Naive thymus-derived CD4-positive, alpha-beta T cell (primary cell): ENCODE measurements at regions of chr12 and their contacts with region 1.

Region 1: GRCh38 chr12:68807576-68808387 is at the start of gene MDM2:
- DNase-seq: peak; percentile 94 to 98 (median 96)
- ATAC-seq: peak; percentile 97
- H3K4me3 ChIP-seq: peak within 1 kb of the TSS; percentile 79
- H3K4me3 Mint-ChIP-seq: peak within 1 kb of the TSS; percentile 87 to 100 (median 96)
- H3K27ac ChIP-seq: peak within 1 kb of the TSS; percentile 96
- H3K27ac Mint-ChIP-seq: peak within 1 kb of the TSS; percentile 96 to 100 (median 97)
- H3K4me1 ChIP-seq: peaks cover 3 to 13% of the 10 kb centered on the region in 2 donors
- H3K4me1 Mint-ChIP-seq: peaks cover 6 to 47% (median 29%) of the 10 kb centered on the region in 7 donors
- H3K27me3 ChIP-seq: no peaks in the 10 kb centered on the region
- H3K27me3 Mint-ChIP-seq: no peaks in the 10 kb centered on the region
- total RNA-seq, gene MDM2: 77.8 to 271 (median 80.8) TPM

Region 2: GRCh38 chr12:68223083-68223747 is 584.6 kb before region 1 on chr12:
- CTCF ChIA-PET with region 1: no interaction called
- POLR2A ChIA-PET with region 1: no interaction called
- intact Hi-C with region 1: loop called in 1 of 2 experiments (anchors 5 kb)
- DNase-seq: peak; percentile 39 to 74 (median 64)
- ATAC-seq: peak; percentile 99
- H3K4me3 ChIP-seq: no peak overlapping the region
- H3K4me3 Mint-ChIP-seq: peak overlapping the region in 9 of 10 donors; percentile 30 to 86 (median 65)
- H3K27ac ChIP-seq: no peak overlapping the region
- H3K27ac Mint-ChIP-seq: peak overlapping the region in 6 of 9 donors; percentile 8 to 77 (median 44)
- H3K4me1 ChIP-seq: no peaks in the 10 kb centered on the region
- H3K4me1 Mint-ChIP-seq: peaks cover 6 to 35% (median 6%) of the 10 kb centered on the region in 7 donors
- H3K27me3 ChIP-seq: no peaks in the 10 kb centered on the region
- H3K27me3 Mint-ChIP-seq: peaks cover 0 to 11% (median 0%) of the 10 kb centered on the region in 5 donors

Region 3: DNA sequence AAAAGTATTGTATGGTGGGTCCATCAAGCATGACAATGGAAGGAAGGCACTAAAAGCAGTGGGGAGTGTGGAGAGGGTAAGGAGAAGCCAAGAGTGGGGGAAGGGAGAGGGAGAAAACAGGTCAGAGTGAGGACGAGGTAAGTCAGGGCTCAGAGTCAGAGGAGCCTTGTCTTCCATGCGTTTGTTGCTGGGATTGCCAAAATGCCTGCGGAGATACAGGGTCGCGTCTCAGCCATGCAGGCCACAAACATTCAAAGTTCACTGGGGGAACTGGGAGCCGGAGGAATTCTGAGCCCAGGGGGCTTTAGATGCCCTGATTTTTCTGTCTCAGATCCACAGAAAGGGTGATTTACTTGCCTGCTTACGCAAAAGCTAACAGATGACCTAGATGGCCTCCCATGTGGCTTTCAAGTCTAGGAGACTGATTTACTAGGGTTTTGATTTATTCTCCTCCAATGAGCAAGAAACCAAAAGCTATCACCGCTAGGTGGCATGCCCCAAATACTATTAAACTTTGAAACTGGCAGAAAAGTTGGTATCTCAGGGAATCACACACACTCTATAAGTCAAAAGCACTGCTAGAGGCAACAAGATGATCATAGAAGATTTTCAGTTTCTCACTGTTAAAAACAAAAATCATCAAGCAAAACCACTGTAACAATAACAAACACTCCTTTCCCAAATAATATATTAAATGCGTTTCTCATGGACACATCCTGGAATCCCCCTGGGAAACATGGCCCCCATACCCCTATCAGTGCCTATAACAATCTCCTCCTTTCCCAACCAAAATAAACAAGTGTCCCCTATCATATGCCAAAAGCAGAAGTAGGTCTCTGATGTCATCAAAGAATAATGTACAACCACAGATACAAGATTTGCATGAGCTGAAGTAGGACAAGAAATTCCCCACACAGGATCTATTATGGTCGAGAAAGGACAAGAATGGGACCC is 449.0 kb before region 1 on chr12:
- CTCF ChIA-PET with region 1: no interaction called
- POLR2A ChIA-PET with region 1: no interaction called
- intact Hi-C with region 1: loop called (anchors 1 to 5 kb)
- DNase-seq: peak in 7 of 9 donors; percentile 56 to 80 (median 76)
- ATAC-seq: peak; percentile 84
- H3K4me3 ChIP-seq: no peak overlapping the region
- H3K4me3 Mint-ChIP-seq: peak overlapping the region in 1 of 10 donors; percentile 38
- H3K27ac ChIP-seq: no peak overlapping the region
- H3K27ac Mint-ChIP-seq: peak overlapping the region in 2 of 9 donors; percentile 56 to 72
- H3K4me1 ChIP-seq: peaks cover 13 to 17% of the 10 kb centered on the region in 2 donors
- H3K4me1 Mint-ChIP-seq: peaks cover 25 to 36% (median 30%) of the 10 kb centered on the region in 7 donors
- H3K27me3 ChIP-seq: no peaks in the 10 kb centered on the region
- H3K27me3 Mint-ChIP-seq: no peaks in the 10 kb centered on the region

Region 4: DNA sequence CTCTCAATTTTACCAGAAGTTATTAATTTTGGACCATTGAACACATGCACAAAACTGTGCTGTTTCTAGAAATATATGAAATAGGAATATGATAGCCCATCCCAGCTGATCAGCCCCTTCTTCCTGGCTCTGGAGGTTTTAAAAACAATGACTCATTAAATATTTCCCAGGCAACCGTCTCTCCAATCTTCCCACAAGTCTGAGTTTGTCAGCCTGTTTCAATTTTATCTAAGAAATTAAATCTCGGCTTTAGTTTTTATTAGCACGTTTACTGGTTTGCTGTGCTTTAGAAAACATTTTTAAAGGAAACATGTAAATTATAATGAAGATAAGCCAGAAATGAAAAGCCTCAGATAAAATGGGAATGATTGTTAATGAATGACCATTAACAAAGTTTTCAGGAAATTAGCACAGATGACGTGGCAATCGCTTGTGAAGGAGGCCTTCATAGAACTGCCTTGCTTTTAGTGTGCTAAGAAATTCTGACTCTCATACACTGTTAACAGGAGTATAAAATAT is 286.4 kb before region 1 on chr12:
- CTCF ChIA-PET with region 1: no interaction called
- POLR2A ChIA-PET with region 1: no interaction called
- intact Hi-C with region 1: no loop called
- DNase-seq: no peak
- ATAC-seq: no peak
- H3K4me3 ChIP-seq: no peak overlapping the region
- H3K4me3 Mint-ChIP-seq: no peak overlapping the region
- H3K27ac ChIP-seq: no peak overlapping the region
- H3K27ac Mint-ChIP-seq: no peak overlapping the region
- H3K4me1 ChIP-seq: no peaks in the 10 kb centered on the region
- H3K4me1 Mint-ChIP-seq: peaks cover 0 to 9% (median 2%) of the 10 kb centered on the region in 7 donors
- H3K27me3 ChIP-seq: no peaks in the 10 kb centered on the region
- H3K27me3 Mint-ChIP-seq: peaks cover 0 to 2% (median 0%) of the 10 kb centered on the region in 5 donors

Region 5: DNA sequence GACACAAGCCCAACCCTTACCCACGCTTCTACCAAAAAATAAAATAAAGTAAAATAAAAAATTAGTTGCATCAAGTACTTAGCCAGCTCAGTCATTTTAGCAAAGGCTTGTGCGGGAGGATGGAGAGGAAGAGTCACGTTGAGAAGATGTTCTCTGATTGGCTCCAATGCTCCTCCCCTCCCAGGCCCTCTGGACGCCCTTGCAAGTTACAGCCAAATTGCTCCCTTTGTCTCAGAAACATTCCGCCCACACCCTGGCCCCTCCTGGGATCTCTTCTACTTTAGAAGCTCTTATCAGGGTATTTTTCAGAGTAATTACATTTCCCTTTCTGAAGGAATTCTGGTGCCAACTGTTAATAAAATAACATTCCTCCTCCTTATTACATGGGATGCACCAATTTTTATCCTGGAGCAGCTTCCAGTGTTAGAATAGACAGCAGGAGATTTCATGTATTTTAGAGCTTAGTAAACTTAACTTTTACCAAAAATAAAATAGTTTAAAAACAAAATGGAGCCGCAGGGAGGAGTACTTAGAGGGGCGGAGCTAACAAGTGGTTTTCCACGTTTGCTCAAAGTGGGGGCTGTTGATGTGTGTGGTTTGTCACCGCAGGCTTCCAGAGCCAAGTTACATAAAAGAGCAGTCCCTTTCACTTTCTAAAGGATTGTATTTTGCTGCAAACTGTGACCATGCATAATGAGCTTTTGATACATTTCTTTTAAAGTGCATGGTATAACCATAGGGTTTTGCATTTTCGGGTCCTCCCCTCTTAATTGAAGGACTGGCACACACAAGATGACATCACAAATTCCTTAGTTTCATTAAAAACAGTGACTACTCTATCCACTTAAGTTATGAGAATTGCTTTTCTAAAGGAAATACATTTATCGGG is 268.8 kb before region 1 on chr12:
- CTCF ChIA-PET with region 1: no interaction called
- POLR2A ChIA-PET with region 1: no interaction called
- intact Hi-C with region 1: loop called in 1 of 2 experiments (anchors 5 kb)
- DNase-seq: peak in 8 of 9 donors; percentile 47 to 84 (median 76)
- ATAC-seq: peak; percentile 96
- H3K4me3 ChIP-seq: peak overlapping the region; percentile 23
- H3K4me3 Mint-ChIP-seq: peak overlapping the region; percentile 69 to 84 (median 74)
- H3K27ac ChIP-seq: peak overlapping the region; percentile 57
- H3K27ac Mint-ChIP-seq: peak overlapping the region; percentile 83 to 96 (median 88)
- H3K4me1 ChIP-seq: peaks cover 35 to 40% of the 10 kb centered on the region in 2 donors
- H3K4me1 Mint-ChIP-seq: peaks cover 26 to 64% (median 61%) of the 10 kb centered on the region in 7 donors
- H3K27me3 ChIP-seq: no peaks in the 10 kb centered on the region
- H3K27me3 Mint-ChIP-seq: no peaks in the 10 kb centered on the region

Region 6: GRCh38 chr12:68745904-68746571 is 61.7 kb before region 1 on chr12 and contains the start of gene SLC35E3:
- CTCF ChIA-PET with region 1: interaction called, 10 read pairs
- POLR2A ChIA-PET with region 1: interaction called, 55 read pairs
- intact Hi-C with region 1: loop called (anchors 1 kb)
- DNase-seq: peak; percentile 81 to 91 (median 86)
- ATAC-seq: peak; percentile 99
- H3K4me3 ChIP-seq: peak within 1 kb of the TSS; percentile 98
- H3K4me3 Mint-ChIP-seq: peak within 1 kb of the TSS; percentile 91 to 99 (median 96)
- H3K27ac ChIP-seq: peak within 1 kb of the TSS; percentile 79
- H3K27ac Mint-ChIP-seq: peak within 1 kb of the TSS; percentile 92 to 97 (median 96)
- H3K4me1 ChIP-seq: peaks cover 7 to 16% of the 10 kb centered on the region in 2 donors
- H3K4me1 Mint-ChIP-seq: peaks cover 27 to 64% (median 54%) of the 10 kb centered on the region in 7 donors
- H3K27me3 ChIP-seq: no peaks in the 10 kb centered on the region
- H3K27me3 Mint-ChIP-seq: no peaks in the 10 kb centered on the region
- total RNA-seq, gene SLC35E3: 9.0 to 12.1 (median 9.2) TPM

Region 7: GRCh38 chr12:68932961-68933893 is 125.4 kb after region 1 on chr12 and contains the start of gene CPM:
- CTCF ChIA-PET with region 1: no interaction called
- POLR2A ChIA-PET with region 1: no interaction called
- intact Hi-C with region 1: loop called (anchors 2 kb)
- DNase-seq: peak; percentile 47 to 89 (median 62)
- ATAC-seq: peak; percentile 98
- H3K4me3 ChIP-seq: peak within 1 kb of the TSS; percentile 58
- H3K4me3 Mint-ChIP-seq: peak within 1 kb of the TSS; percentile 83 to 95 (median 89)
- H3K27ac ChIP-seq: peak within 1 kb of the TSS; percentile 0
- H3K27ac Mint-ChIP-seq: peak within 1 kb of the TSS in 3 of 9 donors; percentile 51 to 55 (median 53)
- H3K4me1 ChIP-seq: peaks cover 0 to 6% of the 10 kb centered on the region in 2 donors
- H3K4me1 Mint-ChIP-seq: peaks cover 6 to 20% (median 7%) of the 10 kb centered on the region in 7 donors
- H3K27me3 ChIP-seq: peaks cover 0 to 2% of the 10 kb centered on the region in 2 donors
- H3K27me3 Mint-ChIP-seq: peaks cover 5 to 16% (median 11%) of the 10 kb centered on the region in 5 donors
- total RNA-seq, gene CPM: 1.0 to 5.9 (median 2.7) TPM

Region 8: DNA sequence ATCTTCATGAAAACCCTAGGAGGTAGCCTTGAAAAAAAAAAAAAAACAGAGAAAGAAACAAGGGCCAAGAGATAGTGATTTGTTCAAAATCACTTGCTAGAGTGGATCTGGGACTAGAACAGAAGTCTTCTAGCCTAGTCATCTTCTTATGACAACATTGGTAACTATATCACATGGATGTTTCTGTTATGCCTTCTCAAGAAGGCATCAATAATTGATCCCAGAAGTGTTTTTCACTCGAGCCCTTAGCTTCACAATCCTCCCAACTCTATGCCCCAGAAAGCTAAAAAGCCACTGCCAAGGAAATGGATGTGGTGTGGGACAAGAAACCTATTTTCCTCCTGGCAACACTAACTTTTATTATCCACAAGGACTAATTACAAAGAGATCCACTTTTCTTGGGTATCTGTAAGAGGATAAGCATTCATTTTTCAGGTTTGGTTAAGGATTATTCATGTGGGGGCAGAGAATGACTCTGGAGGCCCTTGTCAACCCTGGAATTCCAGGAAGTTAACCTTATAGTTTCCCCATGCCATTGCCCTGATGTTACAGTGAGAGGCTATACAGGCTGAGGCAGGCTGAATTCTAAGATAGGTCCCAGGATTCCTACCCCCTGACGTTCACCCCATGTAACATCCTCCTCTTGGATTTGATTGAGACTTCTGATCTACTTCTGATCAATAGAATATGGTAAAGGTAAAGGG is 192.9 kb after region 1 on chr12:
- CTCF ChIA-PET with region 1: no interaction called
- POLR2A ChIA-PET with region 1: no interaction called
- intact Hi-C with region 1: no loop called
- DNase-seq: no peak
- ATAC-seq: no peak
- H3K4me3 ChIP-seq: no peak overlapping the region
- H3K4me3 Mint-ChIP-seq: no peak overlapping the region
- H3K27ac ChIP-seq: no peak overlapping the region
- H3K27ac Mint-ChIP-seq: no peak overlapping the region
- H3K4me1 ChIP-seq: no peaks in the 10 kb centered on the region
- H3K4me1 Mint-ChIP-seq: peaks cover 0 to 1% (median 0%) of the 10 kb centered on the region in 7 donors
- H3K27me3 ChIP-seq: no peaks in the 10 kb centered on the region
- H3K27me3 Mint-ChIP-seq: peaks cover 0 to 4% (median 0%) of the 10 kb centered on the region in 5 donors

Region 9: GRCh38 chr12:69534389-69534822 is 726.6 kb after region 1 on chr12:
- CTCF ChIA-PET with region 1: no interaction called
- POLR2A ChIA-PET with region 1: no interaction called
- intact Hi-C with region 1: no loop called
- DNase-seq: peak in 1 of 9 donors; percentile 39
- ATAC-seq: peak; percentile 46
- H3K4me3 ChIP-seq: no peak overlapping the region
- H3K4me3 Mint-ChIP-seq: peak overlapping the region in 1 of 10 donors; percentile 49
- H3K27ac ChIP-seq: no peak overlapping the region
- H3K27ac Mint-ChIP-seq: peak overlapping the region in 6 of 9 donors; percentile 6 to 63 (median 34)
- H3K4me1 ChIP-seq: no peaks in the 10 kb centered on the region
- H3K4me1 Mint-ChIP-seq: peaks cover 6 to 38% (median 28%) of the 10 kb centered on the region in 7 donors
- H3K27me3 ChIP-seq: no peaks in the 10 kb centered on the region
- H3K27me3 Mint-ChIP-seq: no peaks in the 10 kb centered on the region

Region 10: GRCh38 chr12:69738351-69739286 is 930.8 kb after region 1 on chr12 and contains the start of gene RAB3IP:
- CTCF ChIA-PET with region 1: no interaction called
- POLR2A ChIA-PET with region 1: no interaction called
- intact Hi-C with region 1: loop called in 1 of 2 experiments (anchors 2 kb)
- DNase-seq: peak; percentile 85 to 97 (median 90)
- ATAC-seq: peak; percentile 96
- H3K4me3 ChIP-seq: peak within 1 kb of the TSS; percentile 82
- H3K4me3 Mint-ChIP-seq: peak within 1 kb of the TSS; percentile 84 to 95 (median 89)
- H3K27ac ChIP-seq: peak within 1 kb of the TSS; percentile 78
- H3K27ac Mint-ChIP-seq: peak within 1 kb of the TSS; percentile 71 to 92 (median 81)
- H3K4me1 ChIP-seq: peaks cover 0 to 8% of the 10 kb centered on the region in 2 donors
- H3K4me1 Mint-ChIP-seq: peaks cover 14 to 37% (median 30%) of the 10 kb centered on the region in 7 donors
- H3K27me3 ChIP-seq: no peaks in the 10 kb centered on the region
- H3K27me3 Mint-ChIP-seq: peaks cover 0 to 40% (median 6%) of the 10 kb centered on the region in 5 donors
- total RNA-seq, gene RAB3IP: 23.5 to 29.7 (median 23.7) TPM